ENCODE measurements at regions of chr1 and their contacts with region 1.

Region 1: GRCh38 chr1:37474046-37474759 is at the start of gene ZC3H12A:
- DNase-seq: peak; percentile 92
- ATAC-seq: peak; percentile 66
- H3K4me3 Mint-ChIP-seq: peak within 1 kb of the TSS; percentile 90
- H3K27ac Mint-ChIP-seq: peak within 1 kb of the TSS; percentile 98
- H3K4me1 Mint-ChIP-seq: peaks cover 62% of the 10 kb centered on the region
- H3K27me3 Mint-ChIP-seq: no peaks in the 10 kb centered on the region
- total RNA-seq, gene ZC3H12A: 15.1 to 17.8 TPM

Region 2: GRCh38 chr1:37449936-37450335 is 24.3 kb before region 1 on chr1:
- CTCF ChIA-PET with region 1: interaction called, 67 read pairs
- POLR2A ChIA-PET with region 1: interaction called, 13 read pairs
- DNase-seq: peak; percentile 53
- ATAC-seq: no peak
- H3K4me3 Mint-ChIP-seq: no peak overlapping the region
- H3K27ac Mint-ChIP-seq: peak overlapping the region; percentile 60
- H3K4me1 Mint-ChIP-seq: peaks cover 15% of the 10 kb centered on the region
- H3K27me3 Mint-ChIP-seq: peaks cover 5% of the 10 kb centered on the region

Region 3: DNA sequence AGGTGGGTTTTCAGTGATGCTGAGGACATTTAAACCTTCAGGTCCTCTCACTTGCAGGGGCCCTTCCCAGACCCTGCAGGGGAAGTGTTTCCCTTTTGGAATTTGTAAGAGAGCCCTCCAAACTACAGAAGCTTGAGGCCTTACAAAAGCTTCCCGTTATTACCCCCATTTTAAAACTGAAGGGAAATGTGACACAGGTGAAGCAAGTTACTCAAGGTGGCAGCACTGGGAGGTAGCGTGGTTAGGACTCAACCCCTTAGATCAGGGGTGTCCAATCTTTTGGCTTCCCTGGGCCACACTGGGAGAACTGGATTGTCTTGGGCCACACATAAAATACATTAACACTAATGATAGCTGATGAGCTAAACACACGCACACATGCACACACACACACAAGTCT is 15.7 kb before region 1 on chr1:
- CTCF ChIA-PET with region 1: interaction called, 67 read pairs
- POLR2A ChIA-PET with region 1: interaction called, 13 read pairs
- DNase-seq: no peak
- ATAC-seq: no peak
- H3K4me3 Mint-ChIP-seq: no peak overlapping the region
- H3K27ac Mint-ChIP-seq: no peak overlapping the region
- H3K4me1 Mint-ChIP-seq: peaks cover 12% of the 10 kb centered on the region
- H3K27me3 Mint-ChIP-seq: no peaks in the 10 kb centered on the region

Region 4: GRCh38 chr1:37514350-37515184 is 40.4 kb after region 1 on chr1 and contains the start of gene MEAF6:
- CTCF ChIA-PET with region 1: interaction called, 34 read pairs
- POLR2A ChIA-PET with region 1: interaction called, 22 read pairs
- DNase-seq: peak; percentile 87
- ATAC-seq: peak; percentile 96
- H3K4me3 Mint-ChIP-seq: peak within 1 kb of the TSS; percentile 96
- H3K27ac Mint-ChIP-seq: peak within 1 kb of the TSS; percentile 95
- H3K4me1 Mint-ChIP-seq: peaks cover 48% of the 10 kb centered on the region
- H3K27me3 Mint-ChIP-seq: no peaks in the 10 kb centered on the region
- total RNA-seq, gene MEAF6: 70.8 to 73.0 TPM

Region 5: GRCh38 chr1:37519613-37520012 is 45.4 kb after region 1 on chr1:
- CTCF ChIA-PET with region 1: interaction called, 34 read pairs
- POLR2A ChIA-PET with region 1: interaction called, 22 read pairs
- DNase-seq: peak; percentile 23
- ATAC-seq: no peak
- H3K4me3 Mint-ChIP-seq: peak overlapping the region; percentile 83
- H3K27ac Mint-ChIP-seq: peak overlapping the region; percentile 96
- H3K4me1 Mint-ChIP-seq: peaks cover 28% of the 10 kb centered on the region
- H3K27me3 Mint-ChIP-seq: no peaks in the 10 kb centered on the region